ENCODE measurements at regions of chr14 and their contacts with region 1.

Region 1: DNA sequence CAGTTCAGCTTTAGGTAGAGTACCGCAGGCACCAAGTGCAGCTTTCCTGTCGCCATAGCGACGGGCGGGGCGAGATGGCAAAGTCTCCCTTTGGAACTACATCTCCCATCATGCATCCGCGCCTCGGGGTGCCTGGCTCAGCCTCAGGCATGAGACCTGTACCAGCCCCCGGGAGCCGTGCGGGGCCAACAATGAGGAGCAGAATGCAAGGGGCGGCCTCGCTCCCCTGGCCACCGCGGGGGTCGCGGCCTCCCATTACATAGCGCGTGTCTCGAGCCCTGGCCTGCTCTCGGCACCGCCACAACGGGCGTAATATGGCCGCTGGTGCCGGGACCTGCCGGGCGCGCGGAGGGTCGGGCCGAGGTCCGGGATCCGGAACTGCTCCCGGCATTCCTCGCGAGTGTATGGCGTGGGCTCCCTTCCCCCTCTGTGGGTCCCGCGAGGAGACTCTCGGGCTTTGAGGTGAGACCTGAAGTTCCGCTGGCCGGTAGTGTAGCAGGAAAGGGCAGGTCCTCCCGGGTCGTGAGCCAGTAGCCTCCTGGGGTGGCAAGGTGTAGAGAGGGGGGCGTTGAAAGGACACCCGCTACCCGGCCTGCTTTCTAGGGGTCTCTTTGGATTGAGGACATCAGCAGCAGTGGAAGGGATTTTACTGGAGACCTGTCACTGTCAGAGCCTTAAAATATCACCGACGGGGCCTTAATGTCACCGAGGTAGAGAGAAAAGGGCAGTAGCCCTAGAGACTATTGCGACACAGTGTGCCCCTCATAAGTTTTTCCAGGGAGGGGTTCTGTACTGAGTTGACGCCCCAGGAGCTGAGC is at the start of gene THTPA:
- DNase-seq: peak; percentile 88
- ATAC-seq: peak; percentile 79
- H3K4me3 Mint-ChIP-seq: peak within 1 kb of the TSS; percentile 94
- H3K27ac Mint-ChIP-seq: peak within 1 kb of the TSS; percentile 95
- H3K4me1 Mint-ChIP-seq: peaks cover 30% of the 10 kb centered on the region
- H3K27me3 Mint-ChIP-seq: no peaks in the 10 kb centered on the region
- CTCF ChIP-seq: no peak
- total RNA-seq, gene THTPA: 18.0 and 18.6 TPM in 2 replicates

Region 2: GRCh38 chr14:23320774-23321571 is 235.1 kb before region 1 on chr14 and contains the start of gene PABPN1:
- CTCF ChIA-PET with region 1: no interaction called
- POLR2A ChIA-PET with region 1: interaction called, 11 read pairs
- intact Hi-C with region 1: loop called (anchors 1 kb)
- DNase-seq: peak; percentile 89
- ATAC-seq: peak; percentile 87
- H3K4me3 Mint-ChIP-seq: peak within 1 kb of the TSS; percentile 90
- H3K27ac Mint-ChIP-seq: peak within 1 kb of the TSS; percentile 98
- H3K4me1 Mint-ChIP-seq: peaks cover 26% of the 10 kb centered on the region
- H3K27me3 Mint-ChIP-seq: no peaks in the 10 kb centered on the region
- CTCF ChIP-seq: no peak
- total RNA-seq, gene PABPN1: 259 and 264 TPM in 2 replicates

Region 3: DNA sequence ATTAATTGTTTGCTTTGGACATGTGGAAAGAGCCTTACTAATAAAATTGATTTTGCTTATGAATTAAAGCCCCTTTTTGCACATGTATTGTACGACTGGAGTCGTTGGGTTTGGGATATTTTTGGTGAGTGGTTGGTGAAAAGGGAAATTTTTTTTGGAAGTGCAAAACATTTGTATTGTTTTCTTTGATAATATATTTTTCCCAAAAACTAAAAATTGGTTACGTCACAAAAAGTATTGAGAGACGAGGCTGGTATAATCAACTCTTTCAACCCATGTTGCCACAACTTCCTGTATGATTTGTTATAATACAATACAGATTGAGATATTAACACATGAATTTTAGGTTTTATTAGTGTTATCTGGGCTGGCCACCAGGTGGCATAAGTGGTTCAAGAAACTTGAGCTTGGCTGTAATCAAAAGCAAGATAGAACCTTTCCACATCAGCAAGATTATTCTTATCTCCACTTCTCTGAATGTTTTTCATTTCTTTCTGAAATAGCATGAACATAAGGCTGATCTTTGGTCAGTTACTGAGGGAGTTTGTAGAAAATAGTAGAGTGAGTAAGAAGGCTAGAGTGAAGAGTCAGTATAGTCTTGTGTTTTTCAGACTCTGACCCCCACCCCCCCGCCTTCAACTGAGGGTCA is 77.9 kb before region 1 on chr14:
- CTCF ChIA-PET with region 1: interaction called, 128 read pairs
- POLR2A ChIA-PET with region 1: interaction called, 10 read pairs
- intact Hi-C with region 1: no loop called
- DNase-seq: peak; percentile 25
- ATAC-seq: peak; percentile 62
- H3K4me3 Mint-ChIP-seq: no peak overlapping the region
- H3K27ac Mint-ChIP-seq: no peak overlapping the region
- H3K4me1 Mint-ChIP-seq: peaks cover 2% of the 10 kb centered on the region
- H3K27me3 Mint-ChIP-seq: no peaks in the 10 kb centered on the region
- CTCF ChIP-seq: no peak

Region 4: GRCh38 chr14:23567192-23568020 is 11.3 kb after region 1 on chr14 and contains the start of gene AP1G2:
- CTCF ChIA-PET with region 1: interaction called, 8 read pairs
- POLR2A ChIA-PET with region 1: interaction called, 41 read pairs
- intact Hi-C with region 1: loop called (anchors 1 kb)
- DNase-seq: peak; percentile 87
- ATAC-seq: peak; percentile 96
- H3K4me3 Mint-ChIP-seq: peak within 1 kb of the TSS; percentile 100
- H3K27ac Mint-ChIP-seq: peak within 1 kb of the TSS; percentile 98
- H3K4me1 Mint-ChIP-seq: peaks cover 32% of the 10 kb centered on the region
- H3K27me3 Mint-ChIP-seq: peaks cover 9% of the 10 kb centered on the region
- CTCF ChIP-seq: no peak
- total RNA-seq, gene AP1G2: 336 and 373 TPM in 2 replicates

Region 5: DNA sequence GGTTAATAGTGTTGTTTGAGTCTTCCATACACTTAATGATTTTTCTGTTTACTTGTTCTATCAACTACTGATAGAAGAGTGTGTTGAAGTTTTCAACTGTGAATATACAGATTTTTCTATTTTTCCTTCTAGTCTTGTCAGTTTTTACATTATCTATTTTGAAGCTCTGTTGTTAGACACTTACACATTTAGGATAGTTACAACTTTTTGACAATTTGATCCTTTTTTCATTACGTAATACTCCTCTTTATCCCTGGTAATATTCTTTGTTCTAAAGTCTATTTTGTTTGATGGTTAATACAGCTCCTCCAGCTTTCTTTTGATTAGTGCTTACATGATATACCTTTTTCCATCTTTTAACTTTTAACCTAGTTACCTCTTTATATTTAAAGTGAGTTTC is 125.2 kb after region 1 on chr14:
- CTCF ChIA-PET with region 1: no interaction called
- POLR2A ChIA-PET with region 1: no interaction called
- intact Hi-C with region 1: no loop called
- DNase-seq: no peak
- ATAC-seq: no peak
- H3K4me3 Mint-ChIP-seq: no peak overlapping the region
- H3K27ac Mint-ChIP-seq: no peak overlapping the region
- H3K4me1 Mint-ChIP-seq: no peaks in the 10 kb centered on the region
- H3K27me3 Mint-ChIP-seq: peaks cover 15% of the 10 kb centered on the region
- CTCF ChIP-seq: no peak

Region 6: DNA sequence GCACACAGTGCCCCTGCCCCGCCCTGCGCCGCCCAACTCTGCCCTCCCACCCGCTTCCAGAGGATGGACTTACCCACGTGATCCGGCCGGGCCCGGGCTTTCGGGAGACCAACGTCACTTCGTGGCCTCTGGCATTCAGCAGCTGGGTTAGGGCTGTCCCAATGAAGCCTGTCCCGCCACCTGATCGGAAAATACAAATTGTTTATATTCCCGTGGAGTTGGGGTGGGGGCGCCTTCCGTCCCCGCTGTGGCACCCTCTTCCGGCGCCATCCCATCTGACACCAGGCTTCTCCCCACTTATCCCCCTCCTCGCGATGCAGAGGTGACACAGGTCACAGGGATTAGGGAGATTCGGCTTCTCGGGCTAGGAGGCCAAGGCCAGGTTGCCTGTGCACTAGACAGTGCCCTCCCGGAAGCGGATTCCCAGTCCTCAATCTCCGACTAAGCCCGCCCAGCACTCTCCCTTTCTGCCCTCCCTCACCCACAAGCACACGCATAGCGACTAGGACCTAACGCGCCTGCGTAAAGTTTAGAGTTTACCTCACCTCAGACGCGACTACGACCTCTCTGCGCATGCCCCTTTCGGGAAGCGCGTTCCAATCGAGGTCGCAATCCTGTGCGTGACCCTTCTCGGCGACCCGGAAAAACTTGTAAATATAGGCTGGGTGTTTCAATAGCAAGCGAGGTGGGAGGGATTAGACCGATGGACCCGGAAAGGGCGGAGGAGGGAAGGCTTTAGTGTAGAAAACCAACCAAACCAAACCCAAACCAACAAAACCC is 886.4 kb after region 1 on chr14 and contains the start of gene SDR39U1:
- CTCF ChIA-PET with region 1: no interaction called
- POLR2A ChIA-PET with region 1: no interaction called
- intact Hi-C with region 1: loop called (anchors 10 kb)
- DNase-seq: peak; percentile 81
- ATAC-seq: peak; percentile 89
- H3K4me3 Mint-ChIP-seq: peak within 1 kb of the TSS; percentile 98
- H3K27ac Mint-ChIP-seq: peak within 1 kb of the TSS; percentile 98
- H3K4me1 Mint-ChIP-seq: peaks cover 48% of the 10 kb centered on the region
- H3K27me3 Mint-ChIP-seq: no peaks in the 10 kb centered on the region
- CTCF ChIP-seq: no peak
- total RNA-seq, gene SDR39U1: 70.6 and 80.0 TPM in 2 replicates